ENCODE measurements at regions of chr11 and their contacts with region 1.

Region 1: DNA sequence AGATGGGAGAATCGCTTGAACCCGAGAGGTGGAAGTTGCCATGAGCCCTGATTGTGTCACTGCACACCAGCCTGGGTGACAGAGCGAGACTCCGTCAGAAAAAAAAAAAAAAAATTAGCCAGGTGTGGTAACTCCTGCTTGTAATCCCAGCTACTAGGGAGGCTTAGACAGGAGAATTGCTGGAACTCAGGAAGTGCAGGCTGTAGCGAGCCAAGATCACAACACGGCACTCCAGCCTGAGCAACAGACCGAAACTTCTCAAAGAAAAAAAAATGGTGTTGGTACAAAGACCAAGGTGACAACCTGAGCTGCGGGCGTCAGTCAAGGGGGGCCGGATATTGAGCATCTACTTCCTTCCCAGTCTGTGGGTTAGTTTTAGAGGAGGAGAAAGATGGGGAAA is 48.4 kb upstream of the HSPA8 start:
- DNase-seq: no peak
- ATAC-seq: no peak

Region 2: GRCh38 chr11:123046473-123047259 is 63.7 kb before region 1 on chr11:
- intact Hi-C with region 1: no loop called
- DNase-seq: no peak
- ATAC-seq: no peak

Region 3: GRCh38 chr11:123206791-123207434 is 96.6 kb after region 1 on chr11:
- intact Hi-C with region 1: no loop called
- DNase-seq: no peak
- ATAC-seq: no peak

Region 4: DNA sequence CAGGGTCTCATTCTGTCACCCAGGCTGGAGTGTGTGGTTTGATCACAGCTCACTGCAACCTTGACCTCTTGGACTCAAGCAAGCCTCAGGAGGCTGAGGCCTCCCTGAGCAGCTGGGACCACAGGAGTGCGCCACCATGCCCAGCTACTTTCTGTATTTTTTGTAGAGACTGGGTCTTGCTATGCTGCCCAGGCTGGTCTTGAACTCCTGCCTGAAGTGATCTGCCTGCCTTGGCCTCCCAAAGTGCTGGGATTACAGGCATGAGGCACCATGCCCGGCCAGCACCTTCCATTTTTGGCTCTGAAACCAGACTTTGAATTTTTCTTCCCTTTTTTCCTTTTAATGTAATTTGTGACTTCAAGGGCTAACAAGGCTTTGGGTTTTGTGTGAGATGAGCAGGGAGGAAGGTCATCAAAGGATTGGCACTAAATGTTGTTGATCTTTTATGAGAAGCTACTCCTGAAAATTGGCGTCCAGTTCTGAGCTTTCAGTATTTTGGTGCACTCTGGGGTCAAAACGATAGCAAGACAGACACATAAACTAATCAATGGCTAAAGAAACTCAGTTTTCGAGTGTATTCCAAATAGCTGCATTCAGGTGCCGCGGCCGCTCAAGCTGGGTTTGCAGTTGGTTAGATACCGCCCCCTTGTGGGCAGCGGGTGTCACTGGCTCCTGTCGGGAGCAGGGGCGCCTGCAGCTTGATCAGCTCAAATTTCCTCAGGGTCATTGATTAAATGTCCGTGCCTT is 136.6 kb after region 1 on chr11:
- intact Hi-C with region 1: loop called (anchors 1 to 2 kb)
- DNase-seq: peak; percentile 85
- ATAC-seq: peak; percentile 73 to 83

Region 5: DNA sequence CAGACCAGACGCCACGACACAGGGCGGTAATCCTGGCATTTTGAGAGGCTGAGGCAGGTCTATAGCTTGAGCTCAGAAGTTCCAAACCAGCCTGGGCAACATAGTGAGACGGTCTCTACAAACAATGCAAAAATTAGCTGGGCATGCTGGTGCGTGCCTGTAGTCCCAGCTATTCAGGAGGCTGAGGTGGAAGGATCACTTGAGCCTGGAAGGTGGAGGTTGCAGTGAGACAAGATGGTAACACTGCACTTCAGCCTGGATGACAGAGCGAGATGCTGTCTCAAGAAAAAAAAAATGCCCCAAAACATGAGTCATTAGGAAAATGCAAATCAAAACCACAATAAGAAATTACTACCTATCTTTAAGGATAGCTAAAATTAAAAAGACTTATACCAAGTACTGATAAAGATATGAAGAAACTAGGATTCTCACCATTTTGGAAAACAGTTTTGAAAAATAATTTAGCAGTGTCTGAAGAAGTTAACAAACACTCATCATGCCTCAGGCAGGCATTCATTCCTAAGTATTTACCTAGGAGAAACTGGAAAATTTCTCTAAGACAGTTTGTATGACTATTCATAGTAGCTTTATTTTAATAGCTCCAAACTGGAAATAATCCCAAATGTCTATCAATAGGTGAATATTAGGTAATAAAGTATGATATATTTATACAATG is 228.1 kb after region 1 on chr11:
- intact Hi-C with region 1: no loop called
- DNase-seq: no peak
- ATAC-seq: no peak

Region 6: DNA sequence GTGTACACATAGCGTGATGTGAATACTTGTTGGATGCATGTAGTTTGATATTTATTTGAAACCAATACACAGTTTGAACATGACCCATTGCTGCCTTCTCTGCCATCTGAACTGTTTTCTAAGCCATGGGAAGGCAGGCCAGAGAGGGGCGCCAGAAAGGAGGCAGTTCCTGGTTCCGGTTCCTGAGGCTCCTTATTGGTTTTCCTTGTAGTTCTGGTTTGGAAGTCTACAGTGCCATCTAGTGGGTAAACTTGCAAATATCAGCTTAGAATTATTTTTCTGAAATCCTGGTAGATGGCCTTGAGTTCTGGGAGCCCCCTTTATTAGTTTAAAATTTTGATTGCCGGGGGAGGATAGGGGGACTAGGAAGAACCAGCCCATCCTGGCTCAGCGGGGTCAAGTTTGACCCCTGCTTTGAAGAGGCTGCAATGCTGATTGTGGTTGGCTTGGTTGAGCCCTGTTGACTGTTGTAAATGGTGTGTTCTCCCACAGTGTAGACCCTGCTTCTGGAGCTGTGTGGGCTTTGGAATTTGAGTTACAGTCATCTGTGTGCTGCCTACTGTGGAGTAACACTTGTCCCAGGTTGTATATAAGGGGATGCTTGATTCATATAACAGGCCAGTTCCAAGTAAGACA is 368.1 kb after region 1 on chr11:
- intact Hi-C with region 1: loop called in 1 of 2 experiments (anchors 5 kb)
- DNase-seq: peak; percentile 61
- ATAC-seq: peak; percentile 71 to 83

Measured in left cardiac atrium (tissue), 4 donors.